Transverse colon (tissue), 4 donors: ENCODE measurements at regions of chr5 and their contacts with region 1.

Region 1: GRCh38 chr5:171688696-171689495 is 96.7 kb upstream of the SMIM23 start:
- DNase-seq: no peak
- H3K4me3 ChIP-seq: no peak overlapping the region
- H3K27ac ChIP-seq: no peak overlapping the region
- H3K4me1 ChIP-seq: no peaks in the 10 kb centered on the region
- H3K27me3 ChIP-seq: no peaks in the 10 kb centered on the region
- CTCF ChIP-seq: no peak
- EP300 ChIP-seq: no peak
- POLR2A ChIP-seq: no peak

Region 2: GRCh38 chr5:171649075-171649401 is 39.9 kb before region 1 on chr5:
- in situ Hi-C with region 1: no loop called
- intact Hi-C with region 1: loop called (anchors 1 kb)
- DNase-seq: no peak
- H3K4me3 ChIP-seq: no peak overlapping the region
- H3K27ac ChIP-seq: no peak overlapping the region
- H3K4me1 ChIP-seq: no peaks in the 10 kb centered on the region
- H3K27me3 ChIP-seq: peaks cover 4% of the 10 kb centered on the region
- CTCF ChIP-seq: no peak
- EP300 ChIP-seq: no peak
- POLR2A ChIP-seq: no peak